Natural killer cell (primary cell): ENCODE measurements at regions of chr13 and their contacts with region 1.

Region 1: DNA sequence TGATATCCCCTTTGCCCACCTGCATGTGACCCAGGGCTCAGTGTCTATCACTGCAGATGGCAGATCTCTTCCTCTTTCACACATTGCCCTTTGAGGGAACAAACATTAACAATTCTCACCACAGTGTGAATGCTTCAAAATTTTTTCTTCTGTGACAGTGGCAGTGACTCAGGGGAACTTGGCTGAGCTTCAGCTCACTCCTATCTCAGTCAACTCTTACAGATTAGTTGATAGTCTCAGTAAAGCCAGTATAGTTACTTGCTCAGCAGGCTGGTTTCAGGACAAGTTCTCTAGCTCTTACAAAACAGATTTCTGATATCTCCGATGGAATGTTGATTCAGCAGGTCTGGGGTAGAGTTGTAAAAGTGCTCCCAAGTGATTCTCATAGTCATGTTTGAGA is 166.9 kb downstream of the DLEU7 start:
- DNase-seq: peak in 1 of 2 donors; percentile 45
- ATAC-seq: peak; percentile 80 to 93 (median 90)
- H3K4me3 ChIP-seq: no peak overlapping the region
- H3K4me3 Mint-ChIP-seq: peak overlapping the region; percentile 42
- H3K27ac ChIP-seq: no peak overlapping the region
- H3K27ac Mint-ChIP-seq: peak overlapping the region in 1 of 2 donors; percentile 68
- H3K4me1 ChIP-seq: peaks cover 37% of the 10 kb centered on the region
- H3K4me1 Mint-ChIP-seq: peaks cover 39 to 44% of the 10 kb centered on the region in 2 donors
- H3K27me3 ChIP-seq: peaks cover 40% of the 10 kb centered on the region
- H3K27me3 Mint-ChIP-seq: peaks cover 51 to 89% of the 10 kb centered on the region in 2 donors
- CTCF ChIP-seq: no peak

Region 2: GRCh38 chr13:50713523-50714248 is 37.1 kb after region 1 on chr13:
- intact Hi-C with region 1: loop called (anchors 1 kb)
- DNase-seq: peak; percentile 32 to 63
- ATAC-seq: peak; percentile 94 to 99 (median 95)
- H3K4me3 ChIP-seq: peak overlapping the region; percentile 2
- H3K4me3 Mint-ChIP-seq: peak overlapping the region; percentile 86
- H3K27ac ChIP-seq: peak overlapping the region; percentile 4
- H3K27ac Mint-ChIP-seq: peak overlapping the region; percentile 1 to 79
- H3K4me1 ChIP-seq: peaks cover 20% of the 10 kb centered on the region
- H3K4me1 Mint-ChIP-seq: peaks cover 33 to 38% of the 10 kb centered on the region in 2 donors
- H3K27me3 ChIP-seq: peaks cover 5% of the 10 kb centered on the region
- H3K27me3 Mint-ChIP-seq: peaks cover 37 to 75% of the 10 kb centered on the region in 2 donors
- CTCF ChIP-seq: no peak

Region 3: DNA sequence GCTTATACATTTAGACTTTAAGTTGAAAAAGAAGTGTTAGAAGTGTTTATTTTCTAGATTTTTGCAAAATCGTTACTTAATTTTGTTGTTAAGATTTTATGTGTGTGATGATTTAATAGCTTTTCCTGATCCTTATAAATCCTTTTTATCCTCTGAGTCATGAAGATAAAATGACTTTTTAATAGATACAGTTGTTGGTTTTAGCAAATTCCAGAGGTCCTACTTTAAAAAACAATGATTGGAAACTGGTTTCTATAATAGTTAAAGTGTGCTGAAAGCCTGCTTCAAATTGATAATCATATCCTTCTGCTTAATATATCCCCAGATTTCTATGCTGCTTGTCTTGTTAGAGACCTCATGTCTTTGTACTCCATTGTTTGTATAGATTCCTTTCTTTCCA is 272.0 kb after region 1 on chr13:
- intact Hi-C with region 1: no loop called
- DNase-seq: no peak
- ATAC-seq: no peak
- H3K4me3 ChIP-seq: no peak overlapping the region
- H3K4me3 Mint-ChIP-seq: no peak overlapping the region
- H3K27ac ChIP-seq: no peak overlapping the region
- H3K27ac Mint-ChIP-seq: no peak overlapping the region
- H3K4me1 ChIP-seq: no peaks in the 10 kb centered on the region
- H3K4me1 Mint-ChIP-seq: no peaks in the 10 kb centered on the region
- H3K27me3 ChIP-seq: no peaks in the 10 kb centered on the region
- H3K27me3 Mint-ChIP-seq: no peaks in the 10 kb centered on the region
- CTCF ChIP-seq: no peak